Posterior vena cava (tissue), 2 donors: ENCODE measurements at regions of chr1 and their contacts with region 1.

Region 1: DNA sequence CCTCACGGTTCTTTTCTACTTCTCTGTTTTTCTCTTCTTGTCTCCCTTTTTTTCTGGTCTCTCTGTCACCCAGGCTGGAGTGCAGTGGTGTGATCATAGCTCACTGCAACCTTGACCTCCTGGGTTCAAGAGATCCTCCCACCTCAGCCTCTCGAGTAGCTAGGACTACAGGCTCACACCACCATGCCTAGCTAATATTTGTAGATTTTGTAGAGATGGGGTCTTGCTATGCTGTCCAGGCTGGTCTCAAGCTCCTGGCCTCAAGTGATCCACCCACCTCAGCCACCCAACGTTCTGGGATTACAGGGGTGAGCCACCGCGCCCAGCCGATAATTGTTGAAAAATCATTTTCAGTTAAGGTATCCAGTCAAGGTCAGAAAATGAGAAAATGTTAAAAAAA is 25.9 kb upstream of the LGALS8 start:
- DNase-seq: no peak

Region 2: DNA sequence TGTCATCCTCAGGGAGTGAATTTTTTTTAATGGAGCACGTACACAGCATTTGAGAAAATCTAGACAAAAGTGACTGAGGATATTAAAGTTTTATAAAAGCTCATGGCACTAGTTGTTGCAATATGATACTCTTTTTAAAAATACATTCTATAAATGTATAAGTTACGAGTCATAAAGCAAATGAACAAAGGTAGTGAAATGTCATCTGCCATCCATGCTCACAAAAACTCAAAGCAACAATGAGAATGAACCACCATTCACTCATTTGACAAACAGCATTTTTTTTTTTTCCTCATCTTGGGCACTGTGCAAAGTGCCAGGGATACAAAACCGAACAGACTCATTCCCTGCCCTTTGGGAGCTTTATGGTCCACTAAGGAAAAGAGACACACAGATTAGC is 316.8 kb before region 1 on chr1:
- intact Hi-C with region 1: no loop called
- DNase-seq: no peak

Region 3: DNA sequence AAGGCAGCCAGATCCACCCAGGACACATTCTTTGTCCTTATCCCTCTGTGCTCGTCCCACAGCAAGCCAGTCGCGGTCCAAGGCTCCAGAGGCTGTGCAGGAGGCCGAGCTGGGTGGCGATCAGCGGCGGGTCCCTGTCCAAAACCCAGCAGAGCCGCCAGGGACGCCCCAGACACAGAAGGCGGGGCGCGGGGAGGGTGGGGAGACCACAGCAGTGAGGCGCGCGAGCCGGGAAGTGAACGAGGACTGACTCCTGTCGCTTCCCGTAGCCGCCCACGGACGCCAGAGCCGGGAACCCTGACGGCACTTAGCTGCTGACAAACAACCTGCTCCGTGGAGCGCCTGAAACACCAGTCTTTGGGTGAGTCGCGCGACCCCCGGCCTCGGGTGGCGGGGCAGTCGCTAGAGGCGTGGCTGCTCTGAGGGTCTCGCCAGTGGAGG is 25.8 kb after region 1 on chr1 and contains the start of gene LGALS8:
- intact Hi-C with region 1: loop called in 1 of 2 experiments (anchors 1 kb)
- DNase-seq: peak; percentile 97
- total RNA-seq, gene LGALS8: 43.1 to 45.6 TPM

Region 4: GRCh38 chr1:236534151-236534651 is 36.3 kb after region 1 on chr1:
- intact Hi-C with region 1: no loop called
- DNase-seq: no peak

Region 5: GRCh38 chr1:238232084-238232710 is 1734.3 kb after region 1 on chr1:
- intact Hi-C with region 1: no loop called
- DNase-seq: no peak